MCF 10A (cell line): ENCODE measurements at regions of chr2 and their contacts with region 1.

Region 1: GRCh38 chr2:9770308-9771100 is 72.8 kb upstream of the TAF1B start:
- DNase-seq: peak; percentile 89
- H3K4me3 Mint-ChIP-seq: peak overlapping the region; percentile 39
- H3K27ac Mint-ChIP-seq: no peak overlapping the region
- H3K4me1 Mint-ChIP-seq: peaks cover 26% of the 10 kb centered on the region
- H3K27me3 Mint-ChIP-seq: no peaks in the 10 kb centered on the region
- CTCF ChIP-seq: peak; percentile 69

Region 2: DNA sequence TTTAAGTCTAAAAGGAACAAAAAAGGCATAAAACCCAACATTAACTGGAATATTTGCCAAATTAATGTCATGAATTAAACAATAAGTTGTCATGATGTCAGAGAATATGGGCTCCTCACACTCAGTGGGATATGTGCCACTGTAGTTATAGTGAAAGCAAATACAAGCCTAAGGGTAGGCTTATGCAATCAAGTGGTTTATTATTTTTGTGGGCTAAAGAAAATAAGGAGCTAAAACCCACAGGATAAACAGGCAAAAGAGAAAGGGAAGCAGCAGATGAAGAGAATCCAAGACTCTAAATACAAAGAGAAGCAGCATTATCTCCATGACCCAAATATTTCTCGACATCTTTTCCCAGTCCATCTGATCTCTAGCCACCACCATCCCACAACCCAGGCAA is 157.2 kb before region 1 on chr2:
- CTCF ChIA-PET with region 1: interaction called, 12 read pairs
- POLR2A ChIA-PET with region 1: no interaction called
- intact Hi-C with region 1: no loop called
- DNase-seq: peak; percentile 81
- H3K4me3 Mint-ChIP-seq: no peak overlapping the region
- H3K27ac Mint-ChIP-seq: peak overlapping the region; percentile 40
- H3K4me1 Mint-ChIP-seq: peaks cover 41% of the 10 kb centered on the region
- H3K27me3 Mint-ChIP-seq: no peaks in the 10 kb centered on the region
- CTCF ChIP-seq: no peak

Region 3: GRCh38 chr2:9753276-9753600 is 17.3 kb before region 1 on chr2:
- CTCF ChIA-PET with region 1: interaction called, 81 read pairs
- POLR2A ChIA-PET with region 1: interaction called, 25 read pairs
- intact Hi-C with region 1: no loop called
- DNase-seq: peak; percentile 97
- H3K4me3 Mint-ChIP-seq: peak overlapping the region; percentile 69
- H3K27ac Mint-ChIP-seq: peak overlapping the region; percentile 82
- H3K4me1 Mint-ChIP-seq: peaks cover 36% of the 10 kb centered on the region
- H3K27me3 Mint-ChIP-seq: no peaks in the 10 kb centered on the region
- CTCF ChIP-seq: no peak

Region 4: DNA sequence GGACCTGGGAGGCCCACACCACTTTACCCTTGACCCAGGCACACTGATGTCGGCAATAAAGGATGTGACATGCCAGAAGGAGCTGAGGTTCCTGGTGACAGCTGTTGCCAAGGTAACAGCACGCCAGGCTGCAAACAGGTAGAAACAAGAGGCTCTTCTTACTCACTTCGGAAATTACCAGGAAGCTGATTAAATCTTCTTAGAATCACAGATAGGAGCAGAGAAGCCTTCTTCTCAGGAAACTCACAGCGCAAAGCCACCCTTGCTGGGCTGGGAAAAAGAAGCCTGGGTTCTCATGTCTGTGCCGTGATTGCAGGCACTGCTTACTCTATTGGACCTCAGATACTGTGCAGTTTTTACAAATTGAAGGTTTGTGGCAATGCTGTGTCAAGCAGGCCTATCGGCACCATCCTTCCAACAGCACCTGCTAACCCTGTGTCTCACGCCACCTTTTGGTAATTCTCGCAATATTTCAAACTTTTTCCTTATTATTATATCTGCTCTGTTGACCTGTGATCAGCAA is 11.8 kb after region 1 on chr2:
- CTCF ChIA-PET with region 1: interaction called, 59 read pairs
- POLR2A ChIA-PET with region 1: interaction called, 4 read pairs
- intact Hi-C with region 1: no loop called
- DNase-seq: peak; percentile 75
- H3K4me3 Mint-ChIP-seq: no peak overlapping the region
- H3K27ac Mint-ChIP-seq: peak overlapping the region; percentile 85
- H3K4me1 Mint-ChIP-seq: peaks cover 17% of the 10 kb centered on the region
- H3K27me3 Mint-ChIP-seq: no peaks in the 10 kb centered on the region
- CTCF ChIP-seq: no peak

Region 5: GRCh38 chr2:9914384-9915065 is 144.0 kb after region 1 on chr2:
- CTCF ChIA-PET with region 1: interaction called, 20 read pairs
- POLR2A ChIA-PET with region 1: interaction called, 6 read pairs
- intact Hi-C with region 1: no loop called
- DNase-seq: peak; percentile 92
- H3K4me3 Mint-ChIP-seq: no peak overlapping the region
- H3K27ac Mint-ChIP-seq: peak overlapping the region; percentile 64
- H3K4me1 Mint-ChIP-seq: peaks cover 10% of the 10 kb centered on the region
- H3K27me3 Mint-ChIP-seq: no peaks in the 10 kb centered on the region
- CTCF ChIP-seq: peak; percentile 65